Heart right ventricle (tissue), 16 donors: ENCODE measurements at regions of chr17 and their contacts with region 1.

Region 1: GRCh38 chr17:64648234-64648633 is 13.9 kb downstream of the SMURF2 start:
- DNase-seq: no peak
- ATAC-seq: no peak
- H3K4me3 ChIP-seq: no peak overlapping the region
- H3K27ac ChIP-seq: no peak overlapping the region
- H3K4me1 ChIP-seq: peaks cover 0 to 26% (median 9%) of the 10 kb centered on the region in 9 donors
- H3K27me3 ChIP-seq: no peaks in the 10 kb centered on the region
- CTCF ChIP-seq: no peak

Region 2: DNA sequence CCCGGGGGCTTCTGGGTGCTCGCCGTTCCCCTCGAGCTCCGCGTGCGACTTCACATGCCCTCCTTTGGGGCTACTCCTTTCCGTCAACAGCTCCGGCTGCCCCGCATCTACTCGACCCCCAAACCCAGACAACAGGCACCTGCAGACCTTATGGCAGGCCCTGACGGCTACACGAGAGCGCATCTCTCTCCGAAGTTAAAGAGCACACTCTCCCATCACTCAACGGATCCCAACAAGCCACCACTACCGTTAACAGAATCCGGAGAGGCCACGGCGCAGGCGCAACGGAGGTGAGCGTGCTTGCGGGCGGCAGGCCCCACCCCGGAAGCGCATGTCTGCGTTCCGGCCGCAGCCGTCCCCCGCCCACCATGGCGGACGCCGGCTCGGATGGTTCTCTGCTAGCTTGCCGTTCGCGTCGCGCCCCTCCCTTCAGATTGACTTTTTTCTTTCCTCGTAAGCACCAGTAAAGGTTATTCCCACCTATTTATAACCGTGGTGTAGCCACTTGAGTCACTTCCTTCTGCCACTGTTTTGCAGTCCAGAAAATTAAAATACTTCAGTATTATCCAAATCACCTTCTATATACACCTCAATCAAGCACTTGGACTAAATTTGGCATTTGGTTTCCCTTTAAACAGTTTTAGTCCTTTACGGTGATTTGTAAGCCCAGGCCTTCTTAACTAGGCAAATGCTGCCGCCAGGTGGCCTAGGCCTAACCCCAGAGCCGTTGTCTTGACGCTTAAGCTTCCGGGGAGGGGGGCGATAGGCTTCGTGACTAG is 151.3 kb before region 1 on chr17 and contains the start of gene POLG2:
- intact Hi-C with region 1: loop called in 1 of 10 experiments (anchors 10 kb)
- DNase-seq: peak; percentile 92 to 94
- ATAC-seq: peak; percentile 94 to 98 (median 97)
- H3K4me3 ChIP-seq: peak within 1 kb of the TSS; percentile 42 to 85 (median 76)
- H3K27ac ChIP-seq: peak within 1 kb of the TSS; percentile 39 to 91 (median 82)
- H3K4me1 ChIP-seq: peaks cover 13 to 80% (median 69%) of the 10 kb centered on the region in 9 donors
- H3K27me3 ChIP-seq: no peaks in the 10 kb centered on the region
- CTCF ChIP-seq: peak in 7 of 9 donors; percentile 16 to 54 (median 49)
- total RNA-seq, gene POLG2: 5.1 to 11.1 (median 6.5) TPM

Region 3: GRCh38 chr17:64534175-64534574 is 114.1 kb before region 1 on chr17:
- intact Hi-C with region 1: loop called in 2 of 10 experiments (anchors 10 kb)
- DNase-seq: no peak
- ATAC-seq: no peak
- H3K4me3 ChIP-seq: no peak overlapping the region
- H3K27ac ChIP-seq: no peak overlapping the region
- H3K4me1 ChIP-seq: peaks cover 0 to 7% (median 0%) of the 10 kb centered on the region in 9 donors
- H3K27me3 ChIP-seq: no peaks in the 10 kb centered on the region
- CTCF ChIP-seq: no peak

Region 4: GRCh38 chr17:64565563-64565962 is 82.7 kb before region 1 on chr17:
- intact Hi-C with region 1: loop called in 2 of 10 experiments (anchors 10 kb)
- DNase-seq: no peak
- ATAC-seq: no peak
- H3K4me3 ChIP-seq: no peak overlapping the region
- H3K27ac ChIP-seq: no peak overlapping the region
- H3K4me1 ChIP-seq: peaks cover 0 to 10% (median 0%) of the 10 kb centered on the region in 9 donors
- H3K27me3 ChIP-seq: no peaks in the 10 kb centered on the region
- CTCF ChIP-seq: no peak

Region 5: GRCh38 chr17:64572638-64573154 is 75.5 kb before region 1 on chr17:
- intact Hi-C with region 1: loop called in 2 of 10 experiments (anchors 10 kb)
- DNase-seq: no peak
- ATAC-seq: peak in 6 of 8 donors; percentile 49 to 68 (median 60)
- H3K4me3 ChIP-seq: no peak overlapping the region
- H3K27ac ChIP-seq: peak overlapping the region in 5 of 10 donors; percentile 10 to 61 (median 49)
- H3K4me1 ChIP-seq: peaks cover 0 to 14% (median 5%) of the 10 kb centered on the region in 9 donors
- H3K27me3 ChIP-seq: no peaks in the 10 kb centered on the region
- CTCF ChIP-seq: no peak

Region 6: GRCh38 chr17:64599187-64599676 is 49.0 kb before region 1 on chr17:
- intact Hi-C with region 1: loop called in 2 of 10 experiments (anchors 5 to 10 kb)
- DNase-seq: no peak
- ATAC-seq: peak in 3 of 8 donors; percentile 35 to 40 (median 35)
- H3K4me3 ChIP-seq: no peak overlapping the region
- H3K27ac ChIP-seq: peak overlapping the region in 1 of 10 donors; percentile 51
- H3K4me1 ChIP-seq: peaks cover 0 to 44% (median 12%) of the 10 kb centered on the region in 9 donors
- H3K27me3 ChIP-seq: no peaks in the 10 kb centered on the region
- CTCF ChIP-seq: no peak

Region 7: GRCh38 chr17:64635647-64636307 is 12.5 kb before region 1 on chr17:
- intact Hi-C with region 1: no loop called
- DNase-seq: no peak
- ATAC-seq: no peak
- H3K4me3 ChIP-seq: no peak overlapping the region
- H3K27ac ChIP-seq: no peak overlapping the region
- H3K4me1 ChIP-seq: peaks cover 0 to 52% (median 10%) of the 10 kb centered on the region in 9 donors
- H3K27me3 ChIP-seq: no peaks in the 10 kb centered on the region
- CTCF ChIP-seq: no peak

Region 8: DNA sequence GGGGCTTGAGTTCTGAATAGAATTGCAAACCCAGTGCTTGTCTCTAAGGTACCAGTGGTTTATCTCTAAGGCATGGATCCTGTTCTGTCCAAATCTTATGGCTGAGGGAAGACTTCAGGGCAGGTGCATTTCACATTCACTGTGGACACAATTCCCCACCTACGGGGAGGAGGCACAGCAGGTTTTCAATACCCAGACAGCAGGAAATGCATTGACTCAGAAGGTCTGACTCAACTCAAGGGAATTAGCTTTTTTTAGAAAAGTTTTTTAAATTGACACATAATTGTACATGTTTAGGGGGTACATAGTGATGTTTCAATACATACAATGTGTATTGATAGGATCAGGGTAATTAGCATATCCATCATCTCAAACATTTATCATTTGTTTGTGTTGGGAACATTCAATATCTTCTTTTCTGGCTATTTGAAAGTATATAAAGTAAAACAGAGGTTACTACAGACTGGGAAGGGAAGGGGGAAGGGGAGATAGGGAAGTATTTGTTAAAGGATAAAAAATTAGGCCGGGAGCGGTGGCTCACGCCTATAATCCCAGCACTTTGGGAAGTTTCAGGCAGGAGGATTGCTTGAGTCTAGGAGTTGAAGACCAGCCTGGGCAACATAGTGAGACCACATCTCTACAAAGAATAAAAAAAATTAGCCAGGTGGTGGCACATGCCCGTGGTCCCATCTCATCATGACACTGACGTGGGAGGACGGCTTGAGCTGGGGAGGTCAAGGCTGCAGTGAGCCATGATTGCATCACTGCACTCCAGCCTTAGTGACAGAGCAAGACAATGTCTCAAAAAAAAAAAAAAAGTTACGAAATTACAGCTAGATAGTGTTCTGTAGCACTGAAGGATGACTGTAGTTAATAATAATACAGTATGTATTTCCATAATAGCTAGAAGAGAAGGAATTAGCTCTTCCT is 543.8 kb after region 1 on chr17:
- intact Hi-C with region 1: no loop called
- DNase-seq: no peak
- ATAC-seq: no peak
- H3K4me3 ChIP-seq: no peak overlapping the region
- H3K27ac ChIP-seq: no peak overlapping the region
- H3K4me1 ChIP-seq: no peaks in the 10 kb centered on the region
- H3K27me3 ChIP-seq: peaks cover 0 to 7% (median 0%) of the 10 kb centered on the region in 7 donors
- CTCF ChIP-seq: no peak